K562 (cell line): ENCODE measurements at regions of chr11 and their contacts with region 1.

Region 1: DNA sequence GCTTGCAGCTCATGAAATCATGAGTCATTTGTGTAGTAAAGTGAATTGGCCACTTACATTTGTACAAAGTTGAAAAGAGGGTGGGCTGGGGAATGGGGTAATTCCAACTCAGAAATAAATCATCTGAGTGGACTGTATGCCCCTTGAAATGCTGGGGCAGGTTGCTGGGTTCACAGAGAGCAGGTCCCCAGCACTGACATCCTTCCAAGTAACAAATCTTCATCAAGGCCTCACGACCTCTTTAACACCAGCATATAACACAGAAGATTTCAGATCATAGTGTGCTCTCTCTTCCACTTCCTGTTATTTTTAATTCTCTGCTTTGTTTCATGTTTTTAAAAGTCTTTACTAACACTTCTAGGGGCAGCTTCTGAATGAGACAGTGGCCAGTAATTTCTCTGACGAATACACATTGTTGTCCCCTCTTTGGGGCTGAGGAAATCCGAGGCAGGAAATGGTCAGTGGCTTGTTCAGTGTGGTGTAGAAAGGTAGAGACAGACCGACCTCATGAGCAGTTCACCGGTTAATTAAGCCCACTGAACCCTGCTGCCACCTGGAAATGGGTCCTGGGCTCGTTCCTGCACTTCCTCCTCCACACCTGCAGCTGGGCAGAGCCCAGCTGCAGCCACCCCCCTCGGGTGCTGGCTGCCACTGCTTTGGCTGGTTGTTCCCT is 127.7 kb downstream of the MAML2 start:
- DNase-seq: peak in 2 of 4 experiments; percentile 16 to 20
- ATAC-seq: peak; percentile 22
- H3K4me3 ChIP-seq: no peak overlapping the region
- H3K27ac ChIP-seq: peak overlapping the region; percentile 50
- H3K4me1 ChIP-seq: peaks cover 9 to 63% of the 10 kb centered on the region in 2 experiments
- H3K27me3 ChIP-seq: no peaks in the 10 kb centered on the region
- CTCF ChIP-seq: no peak
- EP300 ChIP-seq: no peak
- POLR2A ChIP-seq: no peak
- RAD21 ChIP-seq: no peak

Region 2: GRCh38 chr11:96254087-96254486 is 38.8 kb after region 1 on chr11:
- CTCF ChIA-PET with region 1: no interaction called
- POLR2A ChIA-PET with region 1: no interaction called
- in situ Hi-C with region 1: no loop called
- intact Hi-C with region 1: loop called (anchors 5 kb)
- DNase-seq: no peak
- ATAC-seq: no peak
- H3K4me3 ChIP-seq: no peak overlapping the region
- H3K27ac ChIP-seq: no peak overlapping the region
- H3K4me1 ChIP-seq: peaks cover 12 to 39% of the 10 kb centered on the region in 2 experiments
- H3K27me3 ChIP-seq: no peaks in the 10 kb centered on the region
- CTCF ChIP-seq: no peak
- EP300 ChIP-seq: no peak
- POLR2A ChIP-seq: no peak
- RAD21 ChIP-seq: no peak